Sigmoid colon (tissue), 7 donors: ENCODE measurements at regions of chrX and their contacts with region 1.

Region 1: GRCh38 chrX:94058728-94059382 is 384.8 kb downstream of the FAM133A start:
- DNase-seq: no peak
- H3K4me3 ChIP-seq: no peak overlapping the region
- H3K27ac ChIP-seq: no peak overlapping the region
- H3K4me1 ChIP-seq: no peaks in the 10 kb centered on the region
- H3K27me3 ChIP-seq: no peaks in the 10 kb centered on the region
- CTCF ChIP-seq: peak in 1 of 4 experiments; percentile 38
- EP300 ChIP-seq: no peak
- POLR2A ChIP-seq: no peak

Region 2: DNA sequence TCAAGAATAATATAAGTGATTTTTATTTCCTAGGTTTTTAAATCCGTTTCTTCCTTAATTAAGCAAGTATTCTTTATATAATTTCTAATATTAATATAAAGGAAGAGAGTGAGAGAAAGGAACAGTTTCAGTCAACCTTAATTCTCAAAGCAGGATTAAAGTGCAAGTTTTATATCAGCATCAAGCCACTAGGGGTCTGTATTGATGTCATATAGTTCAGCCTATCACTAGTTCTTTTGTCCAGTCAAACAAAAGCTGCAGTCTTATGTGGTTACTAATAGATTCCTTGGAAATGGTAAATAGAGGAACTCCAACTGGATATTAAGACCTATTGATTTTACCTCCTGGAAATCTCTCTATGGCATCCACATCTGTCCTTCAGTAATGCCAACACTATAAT is 467.5 kb before region 1 on chrX:
- intact Hi-C with region 1: no loop called
- DNase-seq: no peak
- H3K4me3 ChIP-seq: no peak overlapping the region
- H3K27ac ChIP-seq: no peak overlapping the region
- H3K4me1 ChIP-seq: no peaks in the 10 kb centered on the region
- H3K27me3 ChIP-seq: no peaks in the 10 kb centered on the region
- CTCF ChIP-seq: no peak
- EP300 ChIP-seq: no peak
- POLR2A ChIP-seq: no peak

Region 3: DNA sequence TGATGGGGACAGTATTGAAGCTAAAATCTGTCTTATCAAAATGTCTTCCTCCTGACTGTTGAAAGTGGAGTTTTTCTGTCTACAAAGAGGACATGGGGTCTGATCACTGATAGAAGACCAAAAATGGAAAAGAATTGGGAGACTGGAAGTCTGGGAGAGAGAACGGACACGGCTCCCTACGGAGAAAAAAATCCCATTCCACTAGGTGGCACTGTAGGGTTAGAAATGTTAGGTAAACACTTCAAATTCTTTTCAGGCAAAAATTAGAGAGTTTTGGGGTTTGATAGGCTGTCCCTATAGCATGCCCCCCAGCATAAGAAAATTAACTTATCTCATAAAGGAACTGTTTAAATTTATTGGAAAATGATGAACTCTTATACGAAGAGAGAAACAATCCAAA is 184.3 kb before region 1 on chrX:
- intact Hi-C with region 1: loop called (anchors 5 kb)
- DNase-seq: no peak
- H3K4me3 ChIP-seq: no peak overlapping the region
- H3K27ac ChIP-seq: no peak overlapping the region
- H3K4me1 ChIP-seq: no peaks in the 10 kb centered on the region
- H3K27me3 ChIP-seq: no peaks in the 10 kb centered on the region
- CTCF ChIP-seq: no peak
- EP300 ChIP-seq: no peak
- POLR2A ChIP-seq: no peak

Region 4: GRCh38 chrX:94097868-94098267 is 39.0 kb after region 1 on chrX:
- intact Hi-C with region 1: no loop called
- DNase-seq: no peak
- H3K4me3 ChIP-seq: no peak overlapping the region
- H3K27ac ChIP-seq: no peak overlapping the region
- H3K4me1 ChIP-seq: no peaks in the 10 kb centered on the region
- H3K27me3 ChIP-seq: no peaks in the 10 kb centered on the region
- CTCF ChIP-seq: no peak
- EP300 ChIP-seq: no peak
- POLR2A ChIP-seq: no peak